HEK293 (cell line): ENCODE measurements at regions of chr2 and their contacts with region 1.

Region 1: DNA sequence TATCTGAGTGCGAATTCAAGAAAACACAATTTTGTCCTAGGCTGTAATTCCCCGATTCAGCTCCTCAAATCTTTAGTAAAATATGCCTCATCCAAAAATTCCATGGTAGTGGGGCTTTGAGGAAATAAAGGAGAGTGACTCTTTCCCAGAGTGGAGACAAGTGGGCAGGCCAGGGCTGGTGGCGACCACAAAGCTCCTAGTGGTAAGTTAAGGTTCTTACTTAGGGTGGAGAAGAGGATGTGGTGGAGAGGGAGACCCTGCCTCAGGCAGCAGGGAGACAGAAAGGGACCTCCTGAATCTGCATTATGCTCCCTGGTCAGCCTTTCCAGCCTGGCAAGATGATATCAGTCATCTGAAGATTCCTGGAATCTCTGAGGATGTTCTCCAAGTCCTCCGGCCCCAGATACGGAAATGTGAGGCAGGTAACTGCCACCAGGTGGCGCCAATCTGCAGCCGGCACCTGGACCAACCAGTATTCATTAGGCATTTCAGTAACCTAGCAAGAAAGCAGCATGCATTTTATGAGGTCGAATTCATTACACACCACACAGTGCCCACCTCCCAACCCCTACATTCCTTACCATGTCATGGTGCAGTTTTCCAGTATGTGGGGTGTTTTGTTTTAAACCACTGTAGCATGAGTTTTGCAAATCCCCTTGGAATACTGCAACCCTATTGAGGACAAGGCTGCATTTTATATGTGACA is 106.4 kb downstream of the POLE4 start:
- H3K4me3 ChIP-seq: no peak overlapping the region
- H3K27ac ChIP-seq: no peak overlapping the region
- H3K4me1 ChIP-seq: no peaks in the 10 kb centered on the region
- CTCF ChIP-seq: 0 out of 2 replicates have a peak, but pooled peaks have one; percentile 44

Region 2: DNA sequence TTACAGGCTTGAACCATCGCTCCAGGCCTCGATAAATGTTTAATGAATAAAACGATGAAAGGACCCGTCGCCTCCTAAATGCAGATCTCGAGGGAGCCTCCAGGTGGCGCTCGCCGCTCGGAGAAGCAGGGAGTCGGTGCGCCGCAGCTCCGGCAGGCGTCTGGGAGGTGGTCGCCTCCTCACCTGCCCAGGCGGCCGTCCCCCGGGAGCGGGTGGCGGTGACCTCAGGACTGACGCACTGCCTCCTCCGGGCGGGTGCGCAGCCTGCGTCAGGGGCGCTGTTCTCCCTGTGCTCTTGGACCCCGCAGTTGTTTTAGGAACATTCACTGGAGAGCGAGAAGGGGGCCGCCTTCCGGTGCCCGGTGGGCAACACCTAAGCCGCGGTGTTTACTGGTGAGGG is 145.0 kb before region 1 on chr2:
- CTCF ChIA-PET with region 1: interaction called, 19 read pairs
- POLR2A ChIA-PET with region 1: no interaction called
- H3K4me3 ChIP-seq: peak overlapping the region; percentile 38
- H3K27ac ChIP-seq: no peak overlapping the region
- H3K4me1 ChIP-seq: no peaks in the 10 kb centered on the region
- CTCF ChIP-seq: peak; percentile 94

Region 3: DNA sequence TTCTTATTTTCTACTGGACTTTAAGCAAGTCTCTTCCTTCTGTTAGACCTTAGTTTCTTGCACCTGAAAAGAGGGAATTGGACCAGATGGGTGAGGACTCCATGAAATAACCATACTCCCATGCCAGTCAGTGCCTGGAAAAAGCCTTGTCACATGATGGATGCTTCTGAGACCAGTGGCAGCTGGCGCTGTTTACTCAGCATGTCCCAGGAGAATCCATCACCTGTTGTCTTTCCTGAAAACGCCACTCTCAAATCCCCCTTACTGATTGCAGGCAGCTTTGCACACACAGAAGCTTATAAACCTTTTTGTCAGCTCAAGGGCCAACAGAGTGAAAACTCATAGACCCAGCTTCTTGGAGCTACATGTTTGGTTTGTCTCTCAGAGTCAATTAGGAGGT is 11.2 kb after region 1 on chr2:
- CTCF ChIA-PET with region 1: interaction called, 32 read pairs
- POLR2A ChIA-PET with region 1: no interaction called
- H3K4me3 ChIP-seq: no peak overlapping the region
- H3K27ac ChIP-seq: no peak overlapping the region
- H3K4me1 ChIP-seq: peaks cover 2% of the 10 kb centered on the region; the same call in 1 of the 2 replicates
- CTCF ChIP-seq: no peak